ENCODE measurements at regions of chr9 and their contacts with region 1.

Region 1: DNA sequence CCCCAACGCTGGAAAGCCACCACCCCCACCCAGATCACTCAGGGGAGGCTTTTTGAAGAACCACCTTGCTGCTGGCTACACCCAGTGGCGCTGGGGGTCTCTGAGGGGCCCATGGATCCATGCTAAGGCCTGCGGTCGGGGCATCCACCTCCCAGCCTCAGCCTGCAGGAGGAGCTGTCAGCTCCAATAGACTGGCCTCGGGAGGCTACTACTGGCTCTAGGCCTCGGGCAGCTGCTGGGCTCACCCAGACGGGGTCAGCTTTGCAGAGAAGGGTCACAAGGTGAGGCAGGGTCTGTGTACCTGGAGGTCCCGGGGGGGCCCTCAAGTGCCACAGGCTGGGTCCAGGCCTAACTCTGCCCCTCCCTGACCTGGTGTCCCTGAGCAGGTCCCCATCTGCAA is 193.7 kb downstream of the OLFM1 start:
- DNase-seq: no peak
- ATAC-seq: no peak; the same call in 1 of the 2 replicates
- H3K4me3 ChIP-seq: no peak overlapping the region
- H3K27ac ChIP-seq: no peak overlapping the region
- H3K4me1 ChIP-seq: no peaks in the 10 kb centered on the region
- H3K27me3 ChIP-seq: no peaks in the 10 kb centered on the region
- CTCF ChIP-seq: no peak

Region 2: DNA sequence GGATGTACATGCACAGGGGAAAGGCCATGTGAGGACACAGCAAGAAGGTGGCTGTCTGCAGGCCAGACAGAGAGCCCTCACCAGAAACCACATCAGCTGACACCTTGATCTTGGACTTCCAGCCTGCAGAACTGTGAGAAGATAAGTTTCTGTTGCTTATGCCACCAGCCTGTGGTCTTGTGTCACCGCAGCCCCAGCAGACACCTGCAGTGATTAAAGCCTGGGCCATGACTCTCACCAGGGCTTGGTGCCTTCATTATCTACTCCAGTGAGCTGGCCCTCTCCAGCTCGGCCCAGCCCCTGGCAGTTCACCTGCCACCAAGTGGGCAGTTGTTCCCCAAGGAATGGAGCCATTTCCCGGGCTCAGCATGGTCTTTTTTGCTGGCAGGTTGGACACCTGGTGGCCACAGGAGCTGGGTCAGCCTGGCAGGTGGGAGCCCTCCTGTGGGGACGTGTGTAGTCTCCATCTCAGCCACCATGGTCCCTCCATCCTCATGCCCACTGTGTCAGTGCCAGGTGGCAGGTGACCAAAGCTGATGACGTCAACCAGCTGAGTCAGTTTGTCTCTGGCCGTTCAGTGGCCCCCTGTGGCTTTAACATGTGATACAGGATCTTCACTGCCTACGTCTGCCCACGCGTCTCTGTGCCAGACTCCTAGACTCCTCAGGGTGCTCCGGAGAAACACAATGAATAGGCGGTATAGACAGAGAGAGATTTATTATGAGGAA is 98.6 kb after region 1 on chr9:
- CTCF ChIA-PET with region 1: no interaction called
- POLR2A ChIA-PET with region 1: no interaction called
- in situ Hi-C with region 1: no loop called
- intact Hi-C with region 1: no loop called
- DNase-seq: no peak
- ATAC-seq: no peak
- H3K4me3 ChIP-seq: no peak overlapping the region
- H3K27ac ChIP-seq: no peak overlapping the region
- H3K4me1 ChIP-seq: no peaks in the 10 kb centered on the region
- H3K27me3 ChIP-seq: no peaks in the 10 kb centered on the region; the same call in 1 of the 2 replicates
- CTCF ChIP-seq: no peak

Region 3: GRCh38 chr9:135400496-135400895 is 119.3 kb after region 1 on chr9:
- CTCF ChIA-PET with region 1: interaction called, 10 read pairs
- POLR2A ChIA-PET with region 1: no interaction called
- in situ Hi-C with region 1: no loop called
- intact Hi-C with region 1: no loop called
- DNase-seq: no peak
- ATAC-seq: no peak
- H3K4me3 ChIP-seq: no peak overlapping the region
- H3K27ac ChIP-seq: no peak overlapping the region
- H3K4me1 ChIP-seq: no peaks in the 10 kb centered on the region
- H3K27me3 ChIP-seq: no peaks in the 10 kb centered on the region; the same call in 1 of the 2 replicates
- CTCF ChIP-seq: no peak

Measured in Panc1 (cell line).